AG04449 (cell line): ENCODE measurements at regions of chrX and their contacts with region 1.

Region 1: GRCh38 chrX:133838761-133839676 is 146.4 kb downstream of the GPC3 start:
- DNase-seq: no peak
- H3K4me3 ChIP-seq: no peak overlapping the region
- CTCF ChIP-seq: peak; percentile 42

Region 2: DNA sequence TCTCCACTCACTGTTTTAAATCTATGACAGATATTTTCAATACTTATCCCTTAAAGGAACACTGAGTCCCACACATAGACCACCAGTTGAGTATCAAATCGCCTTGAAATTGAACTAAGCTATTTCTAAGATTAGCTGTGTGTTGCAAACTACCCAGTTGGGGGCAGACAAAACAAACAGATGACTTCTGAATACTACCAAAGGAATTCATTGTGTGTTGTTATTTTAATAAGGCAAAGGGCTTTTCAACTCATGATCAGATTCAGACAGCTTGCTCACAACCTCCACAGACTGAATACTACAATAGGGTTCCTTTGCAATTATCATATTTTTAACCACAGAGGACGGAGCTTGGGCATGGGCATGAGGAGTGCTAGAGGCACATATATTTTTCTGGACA is 140.7 kb before region 1 on chrX:
- CTCF ChIA-PET with region 1: interaction called, 12 read pairs
- POLR2A ChIA-PET with region 1: no interaction called
- DNase-seq: no peak
- H3K4me3 ChIP-seq: no peak overlapping the region
- CTCF ChIP-seq: peak; percentile 2

Region 3: DNA sequence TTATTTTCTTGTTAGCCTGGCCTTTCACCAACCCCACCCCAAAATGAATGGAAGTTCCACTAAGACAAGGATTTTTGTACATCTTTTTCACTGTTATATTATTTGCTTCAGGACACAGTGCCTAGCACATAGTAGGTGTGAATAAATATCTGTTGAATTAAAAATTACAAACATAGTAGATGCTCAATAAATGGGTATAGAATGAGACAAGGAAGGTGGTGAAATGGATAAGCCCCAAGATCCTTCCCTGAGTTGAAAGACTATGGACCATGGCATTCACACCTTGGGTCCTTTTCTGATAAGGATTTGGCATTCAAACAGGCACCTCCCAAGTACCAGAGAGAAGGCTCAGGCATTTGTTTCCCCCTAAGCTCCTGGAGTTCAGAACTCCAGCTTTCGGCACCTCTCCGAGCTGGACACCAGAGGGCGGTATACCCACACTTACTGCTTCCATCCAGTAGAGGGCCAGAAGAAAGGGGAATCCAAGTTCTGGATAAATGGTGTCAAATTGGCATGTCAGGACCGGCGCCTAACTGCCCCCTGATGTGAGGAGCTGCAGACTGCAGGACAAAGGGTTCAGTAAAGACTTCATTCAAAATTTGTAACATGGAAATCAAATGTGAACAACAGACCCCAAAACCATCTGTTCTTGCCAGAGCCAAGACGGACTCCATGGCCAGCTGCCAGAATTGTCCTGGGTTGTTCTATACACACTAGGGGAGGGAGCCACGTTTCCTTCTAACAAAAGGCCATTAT is 46.6 kb before region 1 on chrX:
- CTCF ChIA-PET with region 1: interaction called, 10 read pairs
- POLR2A ChIA-PET with region 1: no interaction called
- DNase-seq: no peak
- H3K4me3 ChIP-seq: peak overlapping the region; percentile 23; the same call in 1 of the 2 replicates
- CTCF ChIP-seq: peak; percentile 96